ENCODE measurements at regions of chr5 and their contacts with region 1.

Region 1: DNA sequence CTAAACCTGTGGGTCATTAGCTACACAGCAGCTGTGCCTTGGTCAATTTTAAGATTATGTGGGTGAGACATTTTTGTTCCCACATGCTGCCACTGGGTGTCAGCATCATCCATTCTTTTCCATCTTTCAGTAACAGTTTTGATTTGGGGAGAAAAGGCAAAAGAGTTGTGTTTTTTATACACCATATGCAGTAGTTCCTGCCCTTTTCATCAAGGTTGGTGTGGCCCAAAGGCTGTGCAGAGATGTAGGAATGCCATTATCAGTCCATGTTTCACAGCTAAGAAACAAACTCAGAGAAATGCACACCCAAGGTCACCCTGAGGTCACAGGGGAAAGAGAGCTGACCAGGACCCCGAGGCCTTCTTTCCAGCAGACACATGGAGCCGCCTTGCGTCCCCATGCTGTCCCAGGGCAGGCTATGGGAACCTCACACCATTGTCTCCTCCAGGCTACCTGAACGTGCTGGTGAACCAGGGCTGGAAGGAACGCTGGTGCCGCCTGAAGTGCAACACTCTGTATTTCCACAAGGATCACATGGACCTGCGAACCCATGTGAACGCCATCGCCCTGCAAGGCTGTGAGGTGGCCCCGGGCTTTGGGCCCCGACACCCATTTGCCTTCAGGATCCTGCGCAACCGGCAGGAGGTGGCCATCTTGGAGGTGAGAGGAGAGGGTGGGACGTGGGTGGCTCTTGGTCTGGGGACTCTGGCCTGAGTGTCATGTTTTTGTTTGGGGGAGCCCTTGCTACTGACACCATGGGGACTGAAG is 27.8 kb upstream of the GRPEL2 start:
- DNase-seq: no peak
- H3K4me3 Mint-ChIP-seq: no peak overlapping the region
- H3K27ac Mint-ChIP-seq: no peak overlapping the region
- H3K4me1 Mint-ChIP-seq: no peaks in the 10 kb centered on the region
- H3K27me3 Mint-ChIP-seq: no peaks in the 10 kb centered on the region

Region 2: GRCh38 chr5:149274939-149275338 is 42.5 kb before region 1 on chr5:
- intact Hi-C with region 1: no loop called
- DNase-seq: no peak
- H3K4me3 Mint-ChIP-seq: no peak overlapping the region
- H3K27ac Mint-ChIP-seq: no peak overlapping the region
- H3K4me1 Mint-ChIP-seq: peaks cover 7% of the 10 kb centered on the region
- H3K27me3 Mint-ChIP-seq: peaks cover 63% of the 10 kb centered on the region

Region 3: GRCh38 chr5:149367249-149367971 is 49.9 kb after region 1 on chr5:
- intact Hi-C with region 1: loop called (anchors 1 kb)
- DNase-seq: peak; percentile 32
- H3K4me3 Mint-ChIP-seq: no peak overlapping the region
- H3K27ac Mint-ChIP-seq: no peak overlapping the region
- H3K4me1 Mint-ChIP-seq: peaks cover 7% of the 10 kb centered on the region
- H3K27me3 Mint-ChIP-seq: no peaks in the 10 kb centered on the region

Region 4: GRCh38 chr5:149434162-149435014 is 116.9 kb after region 1 on chr5:
- intact Hi-C with region 1: loop called (anchors 5 kb)
- DNase-seq: peak; percentile 21
- H3K4me3 Mint-ChIP-seq: no peak overlapping the region
- H3K27ac Mint-ChIP-seq: no peak overlapping the region
- H3K4me1 Mint-ChIP-seq: peaks cover 23% of the 10 kb centered on the region
- H3K27me3 Mint-ChIP-seq: no peaks in the 10 kb centered on the region